ENCODE measurements at regions of chr18 and their contacts with region 1.

Region 1: DNA sequence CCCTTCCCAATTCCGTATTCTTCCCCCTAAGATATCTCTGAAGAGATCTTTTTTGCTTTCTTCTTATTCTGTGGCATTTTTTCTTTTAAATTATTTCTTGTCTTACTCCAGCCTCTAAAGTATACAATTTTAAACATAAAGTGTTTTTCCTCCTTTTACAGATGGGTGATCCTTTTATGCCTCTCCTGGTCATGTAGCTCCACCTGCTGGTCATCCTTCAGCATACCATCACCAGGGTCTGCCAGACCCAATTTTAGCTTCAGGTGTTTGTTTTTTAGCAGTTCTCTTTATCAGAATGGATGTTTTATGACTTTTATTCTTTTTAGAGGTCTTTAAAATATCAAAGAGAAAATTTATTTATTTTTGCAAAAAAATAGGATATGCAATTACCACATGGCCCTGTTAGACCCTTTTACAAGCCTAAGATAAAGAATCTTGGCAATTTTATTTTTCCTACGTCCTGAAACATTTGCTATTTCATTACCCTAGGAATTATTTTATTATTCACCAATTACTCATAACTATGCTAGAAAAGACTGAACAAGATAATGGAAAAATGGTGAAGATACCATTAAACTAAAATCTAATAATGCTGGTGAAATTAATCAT is 55.5 kb downstream of the PIGN start:
- DNase-seq: peak; percentile 50
- CTCF ChIP-seq: peak; percentile 85

Region 2: DNA sequence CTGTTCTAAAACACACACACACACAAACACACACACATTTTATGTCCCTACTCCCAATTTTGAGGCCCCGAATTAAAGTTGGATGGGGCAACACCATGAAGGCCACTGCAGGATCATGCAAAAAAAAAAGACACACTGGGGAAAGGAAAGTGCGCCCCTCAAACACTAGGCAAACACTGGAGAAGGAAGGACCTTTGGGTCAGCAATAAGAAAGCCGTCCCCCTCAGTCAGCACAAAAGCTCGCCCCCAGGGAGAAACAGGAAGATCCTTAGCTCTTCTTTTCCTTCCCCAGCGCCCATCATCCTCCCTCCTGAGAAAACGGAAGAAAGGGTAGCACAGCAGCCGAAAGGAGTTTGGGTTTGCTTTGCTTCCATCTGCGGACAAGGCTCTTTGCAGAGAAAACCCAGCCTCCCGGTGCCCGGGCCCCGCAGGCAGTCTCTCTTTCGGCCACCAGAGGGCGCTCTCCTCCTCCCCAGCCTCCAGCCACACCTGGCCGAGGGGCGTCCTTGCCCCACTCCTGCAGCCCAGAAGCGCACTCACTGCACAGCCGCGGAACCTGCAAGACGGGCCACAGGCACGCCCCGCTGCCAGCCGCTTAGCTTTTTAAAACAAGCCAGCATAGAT is 549.7 kb before region 1 on chr18:
- CTCF ChIA-PET with region 1: interaction called, 43 read pairs
- POLR2A ChIA-PET with region 1: no interaction called
- DNase-seq: peak; percentile 79
- CTCF ChIP-seq: peak; percentile 94

Region 3: DNA sequence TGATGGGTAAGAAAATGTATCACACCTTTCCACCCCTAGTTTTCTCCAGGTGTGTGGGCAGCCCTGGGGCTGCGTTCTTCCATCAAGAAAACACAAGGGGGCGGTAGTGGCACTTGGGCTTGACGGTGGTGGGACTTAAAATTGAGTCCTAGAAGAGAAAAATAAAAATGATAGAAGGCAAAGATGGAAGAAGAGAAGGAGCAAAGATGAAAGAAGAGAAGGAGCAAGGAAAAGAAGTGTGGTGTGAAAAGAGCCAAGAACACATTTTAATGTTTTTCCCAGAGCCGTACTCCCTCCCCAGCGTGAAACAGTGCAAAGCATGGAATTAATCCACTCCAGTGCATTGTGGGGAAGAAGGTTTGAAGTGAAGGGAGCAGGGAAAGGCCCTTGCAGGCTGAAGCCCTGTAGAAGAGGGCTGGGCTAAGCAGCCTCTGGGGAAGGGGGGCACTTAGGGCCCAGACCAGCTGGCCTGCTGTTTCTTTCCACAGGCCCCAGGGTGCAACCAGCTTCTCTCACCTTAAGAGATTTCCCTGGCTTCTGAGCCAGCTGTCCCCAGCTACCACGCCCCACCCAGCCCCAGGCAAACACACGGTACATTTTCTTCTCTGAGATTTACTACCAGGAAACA is 495.4 kb before region 1 on chr18:
- CTCF ChIA-PET with region 1: interaction called, 36 read pairs
- POLR2A ChIA-PET with region 1: no interaction called
- DNase-seq: peak; percentile 38
- CTCF ChIP-seq: peak; percentile 53

Region 4: DNA sequence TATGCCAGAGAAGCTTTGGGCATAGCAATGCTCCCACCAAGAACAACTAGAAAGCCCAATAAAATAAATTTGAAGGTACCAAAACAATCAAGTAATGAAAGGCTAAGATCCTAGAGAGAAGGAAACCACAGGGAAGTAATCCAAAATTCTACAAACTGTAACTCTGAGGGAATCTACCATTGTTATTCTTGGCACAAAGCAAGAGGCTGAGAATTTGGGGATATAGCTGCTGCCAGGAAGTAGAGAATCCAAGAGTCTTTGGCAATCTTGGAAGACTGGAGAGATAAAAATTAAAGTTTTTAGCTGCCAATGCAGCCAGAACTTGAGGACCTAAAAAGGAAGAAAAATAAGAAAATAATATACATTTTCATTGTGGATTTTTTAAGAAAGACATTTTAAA is 13.1 kb before region 1 on chr18:
- CTCF ChIA-PET with region 1: interaction called, 17 read pairs
- POLR2A ChIA-PET with region 1: no interaction called
- DNase-seq: no peak
- CTCF ChIP-seq: no peak

Region 5: GRCh38 chr18:62144338-62144737 is 12.9 kb after region 1 on chr18:
- CTCF ChIA-PET with region 1: interaction called, 17 read pairs
- POLR2A ChIA-PET with region 1: no interaction called
- DNase-seq: no peak
- CTCF ChIP-seq: no peak

Region 6: GRCh38 chr18:62464266-62464665 is 332.9 kb after region 1 on chr18:
- CTCF ChIA-PET with region 1: no interaction called
- POLR2A ChIA-PET with region 1: no interaction called
- DNase-seq: no peak
- CTCF ChIP-seq: no peak